CD8-positive, alpha-beta T cell (primary cell): ENCODE measurements at regions of chr3 and their contacts with region 1.

Region 1: DNA sequence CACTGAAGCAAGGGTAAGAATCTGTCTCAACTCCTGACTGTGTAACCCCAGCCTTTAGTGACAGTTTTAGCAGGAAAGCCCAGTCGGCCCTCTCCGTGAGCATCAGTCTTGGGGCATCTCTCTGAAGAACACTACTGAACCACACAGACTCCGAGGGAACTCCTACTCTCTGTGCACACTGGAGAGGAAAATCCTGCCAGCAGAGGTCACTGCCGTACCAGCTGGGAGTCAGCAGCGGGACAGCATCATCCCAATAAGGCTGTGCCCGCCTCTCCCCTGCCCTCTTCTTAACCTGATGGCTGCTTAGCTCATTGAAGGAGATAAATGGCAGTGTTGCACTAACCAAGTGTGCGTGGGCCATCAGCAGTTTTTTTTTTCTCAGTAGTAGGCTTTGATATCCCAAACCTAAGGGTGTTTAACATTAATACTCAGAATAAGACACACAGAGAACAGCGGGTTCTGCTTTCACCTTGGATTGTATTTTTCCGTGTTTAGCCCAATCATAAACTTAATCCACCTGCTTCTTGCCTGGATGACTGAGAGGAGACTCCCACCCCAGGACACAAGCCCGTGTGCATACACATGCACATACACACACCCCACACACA is 26.6 kb upstream of the RASA2 start:
- DNase-seq: peak; percentile 77 to 92 (median 88)
- ATAC-seq: peak; percentile 100
- H3K4me3 ChIP-seq: no peak overlapping the region
- H3K4me3 Mint-ChIP-seq: no peak overlapping the region
- H3K27ac ChIP-seq: no peak overlapping the region
- H3K27ac Mint-ChIP-seq: no peak overlapping the region
- H3K4me1 ChIP-seq: no peaks in the 10 kb centered on the region
- H3K4me1 Mint-ChIP-seq: peaks cover 6% of the 10 kb centered on the region
- H3K27me3 ChIP-seq: no peaks in the 10 kb centered on the region
- H3K27me3 Mint-ChIP-seq: peaks cover 2% of the 10 kb centered on the region
- CTCF ChIP-seq: peak; percentile 93

Region 2: GRCh38 chr3:141094790-141095545 is 365.2 kb before region 1 on chr3:
- CTCF ChIA-PET with region 1: no interaction called
- POLR2A ChIA-PET with region 1: no interaction called
- intact Hi-C with region 1: no loop called
- DNase-seq: no peak
- ATAC-seq: no peak
- H3K4me3 ChIP-seq: no peak overlapping the region
- H3K4me3 Mint-ChIP-seq: no peak overlapping the region
- H3K27ac ChIP-seq: no peak overlapping the region
- H3K27ac Mint-ChIP-seq: no peak overlapping the region
- H3K4me1 ChIP-seq: no peaks in the 10 kb centered on the region
- H3K4me1 Mint-ChIP-seq: no peaks in the 10 kb centered on the region
- H3K27me3 ChIP-seq: no peaks in the 10 kb centered on the region
- H3K27me3 Mint-ChIP-seq: no peaks in the 10 kb centered on the region
- CTCF ChIP-seq: no peak

Region 3: DNA sequence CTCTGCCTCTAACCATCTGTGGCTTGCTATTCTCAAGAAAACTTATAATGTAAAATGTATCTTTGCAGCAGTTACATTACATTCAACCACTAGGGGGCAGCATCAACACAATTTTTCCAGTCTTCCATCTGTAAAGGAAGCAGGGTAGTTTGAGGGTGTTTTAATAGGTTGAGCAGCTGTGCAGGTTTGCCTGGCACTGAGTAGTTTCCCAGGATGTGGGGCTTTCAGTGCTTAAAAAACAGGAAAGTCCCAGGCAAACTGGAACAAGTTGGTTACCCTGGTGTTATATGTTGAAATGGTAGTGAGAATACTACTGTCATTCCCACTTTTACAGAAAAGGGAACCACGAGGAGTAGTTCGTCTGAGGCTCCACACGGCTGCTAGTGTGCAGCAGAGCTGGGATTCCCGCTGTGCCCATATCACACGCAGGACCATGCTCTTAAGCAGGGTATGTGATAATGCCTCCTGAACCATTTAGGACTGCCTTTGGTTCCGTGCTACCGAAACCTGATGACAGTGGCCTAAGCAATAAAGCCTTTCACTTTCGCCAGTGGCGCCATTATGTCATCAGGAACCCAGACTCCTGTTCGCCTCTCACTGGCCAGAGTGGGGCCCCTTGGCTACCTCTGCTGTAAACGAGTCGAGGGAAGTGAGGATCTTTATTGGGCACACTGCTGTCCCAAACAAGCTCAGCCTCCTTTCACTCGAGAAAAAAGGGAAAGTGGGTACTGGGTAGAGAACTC is 156.5 kb before region 1 on chr3:
- CTCF ChIA-PET with region 1: interaction called, 242 read pairs
- POLR2A ChIA-PET with region 1: interaction called, 4 read pairs
- intact Hi-C with region 1: no loop called
- DNase-seq: peak in 8 of 9 experiments; percentile 40 to 85 (median 64)
- ATAC-seq: peak; percentile 56
- H3K4me3 ChIP-seq: no peak overlapping the region
- H3K4me3 Mint-ChIP-seq: no peak overlapping the region
- H3K27ac ChIP-seq: no peak overlapping the region
- H3K27ac Mint-ChIP-seq: no peak overlapping the region
- H3K4me1 ChIP-seq: peaks cover 60% of the 10 kb centered on the region
- H3K4me1 Mint-ChIP-seq: peaks cover 66% of the 10 kb centered on the region
- H3K27me3 ChIP-seq: no peaks in the 10 kb centered on the region
- H3K27me3 Mint-ChIP-seq: no peaks in the 10 kb centered on the region
- CTCF ChIP-seq: peak; percentile 85

Region 4: GRCh38 chr3:141370065-141370533 is 90.1 kb before region 1 on chr3:
- CTCF ChIA-PET with region 1: interaction called, 67 read pairs
- POLR2A ChIA-PET with region 1: no interaction called
- intact Hi-C with region 1: no loop called
- DNase-seq: peak; percentile 15 to 94 (median 54)
- ATAC-seq: peak; percentile 100
- H3K4me3 ChIP-seq: no peak overlapping the region
- H3K4me3 Mint-ChIP-seq: no peak overlapping the region
- H3K27ac ChIP-seq: no peak overlapping the region
- H3K27ac Mint-ChIP-seq: no peak overlapping the region
- H3K4me1 ChIP-seq: no peaks in the 10 kb centered on the region
- H3K4me1 Mint-ChIP-seq: peaks cover 9% of the 10 kb centered on the region
- H3K27me3 ChIP-seq: no peaks in the 10 kb centered on the region
- H3K27me3 Mint-ChIP-seq: no peaks in the 10 kb centered on the region
- CTCF ChIP-seq: peak; percentile 62

Region 5: GRCh38 chr3:141422942-141423582 is 37.1 kb before region 1 on chr3:
- CTCF ChIA-PET with region 1: no interaction called
- POLR2A ChIA-PET with region 1: no interaction called
- intact Hi-C with region 1: no loop called
- DNase-seq: no peak
- ATAC-seq: no peak
- H3K4me3 ChIP-seq: no peak overlapping the region
- H3K4me3 Mint-ChIP-seq: no peak overlapping the region
- H3K27ac ChIP-seq: no peak overlapping the region
- H3K27ac Mint-ChIP-seq: no peak overlapping the region
- H3K4me1 ChIP-seq: no peaks in the 10 kb centered on the region
- H3K4me1 Mint-ChIP-seq: peaks cover 46% of the 10 kb centered on the region
- H3K27me3 ChIP-seq: no peaks in the 10 kb centered on the region
- H3K27me3 Mint-ChIP-seq: no peaks in the 10 kb centered on the region
- CTCF ChIP-seq: no peak

Region 6: GRCh38 chr3:141477224-141477623 is 17.0 kb after region 1 on chr3:
- CTCF ChIA-PET with region 1: interaction called, 52 read pairs
- POLR2A ChIA-PET with region 1: no interaction called
- intact Hi-C with region 1: loop called in 1 of 2 experiments (anchors 1 kb)
- DNase-seq: no peak
- ATAC-seq: no peak
- H3K4me3 ChIP-seq: no peak overlapping the region
- H3K4me3 Mint-ChIP-seq: no peak overlapping the region
- H3K27ac ChIP-seq: no peak overlapping the region
- H3K27ac Mint-ChIP-seq: no peak overlapping the region
- H3K4me1 ChIP-seq: peaks cover 34% of the 10 kb centered on the region
- H3K4me1 Mint-ChIP-seq: peaks cover 44% of the 10 kb centered on the region
- H3K27me3 ChIP-seq: no peaks in the 10 kb centered on the region
- H3K27me3 Mint-ChIP-seq: no peaks in the 10 kb centered on the region
- CTCF ChIP-seq: no peak

Region 7: GRCh38 chr3:141570068-141570467 is 109.9 kb after region 1 on chr3:
- CTCF ChIA-PET with region 1: interaction called, 283 read pairs
- POLR2A ChIA-PET with region 1: no interaction called
- intact Hi-C with region 1: no loop called
- DNase-seq: no peak
- ATAC-seq: no peak
- H3K4me3 ChIP-seq: no peak overlapping the region
- H3K4me3 Mint-ChIP-seq: no peak overlapping the region
- H3K27ac ChIP-seq: no peak overlapping the region
- H3K27ac Mint-ChIP-seq: no peak overlapping the region
- H3K4me1 ChIP-seq: no peaks in the 10 kb centered on the region
- H3K4me1 Mint-ChIP-seq: peaks cover 19% of the 10 kb centered on the region
- H3K27me3 ChIP-seq: no peaks in the 10 kb centered on the region
- H3K27me3 Mint-ChIP-seq: no peaks in the 10 kb centered on the region
- CTCF ChIP-seq: no peak

Region 8: GRCh38 chr3:141812084-141812483 is 351.9 kb after region 1 on chr3:
- CTCF ChIA-PET with region 1: no interaction called
- POLR2A ChIA-PET with region 1: no interaction called
- intact Hi-C with region 1: no loop called
- DNase-seq: no peak
- ATAC-seq: no peak
- H3K4me3 ChIP-seq: no peak overlapping the region
- H3K4me3 Mint-ChIP-seq: no peak overlapping the region
- H3K27ac ChIP-seq: no peak overlapping the region
- H3K27ac Mint-ChIP-seq: no peak overlapping the region
- H3K4me1 ChIP-seq: no peaks in the 10 kb centered on the region
- H3K4me1 Mint-ChIP-seq: no peaks in the 10 kb centered on the region
- H3K27me3 ChIP-seq: no peaks in the 10 kb centered on the region
- H3K27me3 Mint-ChIP-seq: peaks cover 5% of the 10 kb centered on the region
- CTCF ChIP-seq: no peak

Region 9: GRCh38 chr3:141845407-141846049 is 385.3 kb after region 1 on chr3:
- CTCF ChIA-PET with region 1: interaction called, 5 read pairs
- POLR2A ChIA-PET with region 1: no interaction called
- intact Hi-C with region 1: loop called in 1 of 2 experiments (anchors 2 kb)
- DNase-seq: peak in 8 of 9 experiments; percentile 12 to 68 (median 50)
- ATAC-seq: peak; percentile 81
- H3K4me3 ChIP-seq: no peak overlapping the region
- H3K4me3 Mint-ChIP-seq: no peak overlapping the region
- H3K27ac ChIP-seq: no peak overlapping the region
- H3K27ac Mint-ChIP-seq: peak overlapping the region; percentile 22
- H3K4me1 ChIP-seq: peaks cover 6% of the 10 kb centered on the region
- H3K4me1 Mint-ChIP-seq: peaks cover 7% of the 10 kb centered on the region
- H3K27me3 ChIP-seq: peaks cover 0 to 3% of the 10 kb centered on the region in 2 experiments
- H3K27me3 Mint-ChIP-seq: peaks cover 3% of the 10 kb centered on the region
- CTCF ChIP-seq: no peak

Region 10: GRCh38 chr3:141998669-141999290 is 538.6 kb after region 1 on chr3:
- CTCF ChIA-PET with region 1: no interaction called
- POLR2A ChIA-PET with region 1: no interaction called
- intact Hi-C with region 1: loop called (anchors 2 to 10 kb)
- DNase-seq: peak in 2 of 9 experiments; percentile 8 to 30
- ATAC-seq: no peak
- H3K4me3 ChIP-seq: no peak overlapping the region
- H3K4me3 Mint-ChIP-seq: no peak overlapping the region
- H3K27ac ChIP-seq: no peak overlapping the region
- H3K27ac Mint-ChIP-seq: no peak overlapping the region
- H3K4me1 ChIP-seq: no peaks in the 10 kb centered on the region
- H3K4me1 Mint-ChIP-seq: no peaks in the 10 kb centered on the region
- H3K27me3 ChIP-seq: no peaks in the 10 kb centered on the region
- H3K27me3 Mint-ChIP-seq: no peaks in the 10 kb centered on the region
- CTCF ChIP-seq: peak; percentile 35

Region 11: DNA sequence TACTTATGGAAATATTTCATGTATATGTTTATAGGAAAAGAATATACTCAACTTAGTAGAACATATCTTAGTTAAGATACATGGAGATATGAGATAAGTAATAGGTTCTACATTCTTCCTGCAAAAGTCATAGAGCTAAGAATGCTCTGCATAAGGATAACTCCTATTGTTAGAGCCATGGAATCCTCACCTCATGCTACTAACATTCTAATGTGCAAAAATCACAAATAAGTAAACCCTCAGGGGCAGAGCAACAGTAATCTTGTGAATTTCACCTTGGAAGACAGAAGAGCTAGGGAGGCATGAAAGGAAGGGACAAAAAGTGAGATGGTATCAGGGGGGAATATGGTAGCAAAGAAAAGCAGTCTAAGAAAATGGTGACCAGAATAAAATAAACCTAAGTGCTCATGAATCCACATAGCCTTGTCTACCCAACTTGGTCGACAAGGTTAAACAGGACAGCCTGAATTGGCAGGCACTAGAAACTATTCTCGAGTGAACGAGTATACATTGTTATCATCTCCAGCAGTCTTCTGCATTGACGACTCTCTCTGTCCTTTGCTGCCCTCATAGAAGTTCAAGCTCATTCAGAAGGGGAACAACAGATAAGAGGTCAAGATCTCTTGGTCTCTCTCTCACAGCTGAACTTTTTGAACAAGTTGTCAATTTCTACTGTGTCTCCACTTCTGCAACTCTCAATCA is 934.9 kb after region 1 on chr3:
- CTCF ChIA-PET with region 1: no interaction called
- POLR2A ChIA-PET with region 1: no interaction called
- intact Hi-C with region 1: no loop called
- DNase-seq: no peak
- ATAC-seq: no peak
- H3K4me3 ChIP-seq: no peak overlapping the region
- H3K4me3 Mint-ChIP-seq: no peak overlapping the region
- H3K27ac ChIP-seq: no peak overlapping the region
- H3K27ac Mint-ChIP-seq: no peak overlapping the region
- H3K4me1 ChIP-seq: no peaks in the 10 kb centered on the region
- H3K4me1 Mint-ChIP-seq: no peaks in the 10 kb centered on the region
- H3K27me3 ChIP-seq: no peaks in the 10 kb centered on the region
- H3K27me3 Mint-ChIP-seq: no peaks in the 10 kb centered on the region
- CTCF ChIP-seq: no peak